Heart right ventricle (tissue), 16 donors: ENCODE measurements at regions of chr7 and their contacts with region 1.

Region 1: GRCh38 chr7:92781117-92781720 is 55.2 kb downstream of the CDK6 start:
- DNase-seq: peak; percentile 31 to 51
- ATAC-seq: peak; percentile 85 to 94 (median 90)
- H3K4me3 ChIP-seq: no peak overlapping the region
- H3K27ac ChIP-seq: peak overlapping the region in 8 of 10 donors; percentile 9 to 69 (median 37)
- H3K4me1 ChIP-seq: peaks cover 0 to 66% (median 46%) of the 10 kb centered on the region in 9 donors
- H3K27me3 ChIP-seq: no peaks in the 10 kb centered on the region
- CTCF ChIP-seq: no peak

Region 2: GRCh38 chr7:92633211-92633906 is 147.9 kb before region 1 on chr7:
- intact Hi-C with region 1: loop called in 1 of 10 experiments (anchors 5 kb)
- DNase-seq: peak in 1 of 2 donors; percentile 23
- ATAC-seq: peak; percentile 80 to 93 (median 90)
- H3K4me3 ChIP-seq: peak overlapping the region in 1 of 10 donors; percentile 2
- H3K27ac ChIP-seq: peak overlapping the region; percentile 13 to 70 (median 50)
- H3K4me1 ChIP-seq: peaks cover 9 to 57% (median 52%) of the 10 kb centered on the region in 9 donors
- H3K27me3 ChIP-seq: no peaks in the 10 kb centered on the region
- CTCF ChIP-seq: no peak

Region 3: DNA sequence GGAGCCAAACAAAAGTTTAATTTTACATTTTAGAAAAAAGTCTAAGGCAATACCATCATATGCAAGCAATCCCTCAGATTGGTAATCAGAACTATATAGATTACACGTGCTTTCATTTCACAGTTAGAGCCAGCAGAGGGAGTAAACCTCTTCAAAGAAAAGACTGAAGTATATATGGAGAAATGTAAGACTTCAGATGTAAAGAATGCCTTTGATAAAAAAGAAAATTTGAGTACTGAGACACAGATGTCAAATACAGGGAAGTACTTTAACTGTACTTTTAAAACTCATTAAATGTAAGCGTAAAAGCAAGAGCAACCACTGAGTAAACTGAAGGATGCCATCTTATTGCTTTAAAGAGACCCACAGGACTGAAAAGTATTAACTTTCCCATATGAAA is 89.6 kb before region 1 on chr7:
- intact Hi-C with region 1: loop called in 1 of 10 experiments (anchors 5 kb)
- DNase-seq: no peak
- ATAC-seq: peak in 1 of 8 donors; percentile 47
- H3K4me3 ChIP-seq: no peak overlapping the region
- H3K27ac ChIP-seq: no peak overlapping the region
- H3K4me1 ChIP-seq: peaks cover 0 to 29% (median 16%) of the 10 kb centered on the region in 9 donors
- H3K27me3 ChIP-seq: no peaks in the 10 kb centered on the region
- CTCF ChIP-seq: peak; percentile 31 to 71 (median 54)

Region 4: DNA sequence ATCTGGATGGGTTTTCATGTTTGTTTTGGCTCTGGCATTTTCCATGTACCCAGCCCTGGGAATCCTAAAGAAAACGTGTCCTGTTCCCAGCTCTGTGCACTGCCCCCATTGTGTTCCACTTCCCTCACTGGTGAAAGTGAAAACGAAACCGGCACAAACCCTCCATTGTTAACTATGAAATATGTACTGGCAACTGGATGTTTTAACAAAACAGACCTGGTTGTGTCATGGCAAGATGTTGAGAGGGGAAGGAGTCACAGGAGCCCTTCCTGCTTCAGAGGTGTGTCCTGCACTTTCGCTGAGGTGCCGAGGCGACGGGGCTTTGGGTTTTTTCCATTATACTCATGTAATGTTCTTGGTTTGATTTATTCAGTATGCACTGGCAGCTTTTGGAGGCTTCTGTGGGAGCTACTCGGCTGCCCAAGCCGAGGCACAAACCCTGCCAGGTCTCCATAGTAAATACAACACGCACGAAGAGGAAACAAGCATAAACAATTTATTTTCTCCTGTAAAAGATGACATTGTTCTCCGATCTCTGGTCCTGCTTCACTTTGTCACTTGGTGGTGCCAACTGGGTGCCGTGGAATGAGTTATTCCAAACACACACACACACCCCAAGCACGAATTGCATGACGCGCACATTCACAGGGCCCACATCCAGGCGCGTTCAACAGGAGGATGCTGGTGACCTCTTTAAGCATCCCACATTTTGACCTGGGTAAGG is 63.1 kb before region 1 on chr7:
- intact Hi-C with region 1: loop called in 1 of 10 experiments (anchors 5 kb)
- DNase-seq: peak; percentile 24 to 80
- ATAC-seq: peak; percentile 80 to 95 (median 92)
- H3K4me3 ChIP-seq: peak overlapping the region in 9 of 10 donors; percentile 14 to 57 (median 42)
- H3K27ac ChIP-seq: peak overlapping the region; percentile 78 to 94 (median 88)
- H3K4me1 ChIP-seq: peaks cover under 1 to 54% (median 30%) of the 10 kb centered on the region in 9 donors
- H3K27me3 ChIP-seq: no peaks in the 10 kb centered on the region
- CTCF ChIP-seq: no peak

Region 5: GRCh38 chr7:92727755-92728154 is 53.5 kb before region 1 on chr7:
- intact Hi-C with region 1: loop called in 2 of 10 experiments (anchors 2 to 5 kb)
- DNase-seq: no peak
- ATAC-seq: no peak
- H3K4me3 ChIP-seq: no peak overlapping the region
- H3K27ac ChIP-seq: no peak overlapping the region
- H3K4me1 ChIP-seq: peaks cover 3 to 57% (median 38%) of the 10 kb centered on the region in 9 donors
- H3K27me3 ChIP-seq: no peaks in the 10 kb centered on the region
- CTCF ChIP-seq: no peak

Region 6: GRCh38 chr7:92845736-92846135 is 64.5 kb after region 1 on chr7:
- intact Hi-C with region 1: no loop called
- DNase-seq: no peak
- ATAC-seq: no peak
- H3K4me3 ChIP-seq: no peak overlapping the region
- H3K27ac ChIP-seq: no peak overlapping the region
- H3K4me1 ChIP-seq: no peaks in the 10 kb centered on the region
- H3K27me3 ChIP-seq: no peaks in the 10 kb centered on the region
- CTCF ChIP-seq: no peak